Dendritic cell treated with granulocyte-macrophage colony-stimulating factor and Interleukin-4, amounts not matched to agents 40 ng/mL and 50 ng/mL, for 4 days (primary cell): ENCODE measurements at regions of chr7 and their contacts with region 1.

Region 1: GRCh38 chr7:74206589-74207120 is 3.2 kb upstream of the LAT2 start:
- H3K4me3 Mint-ChIP-seq: peak overlapping the region; percentile 46
- H3K27ac Mint-ChIP-seq: peak overlapping the region; percentile 54
- H3K4me1 Mint-ChIP-seq: peaks cover 58% of the 10 kb centered on the region
- H3K27me3 Mint-ChIP-seq: no peaks in the 10 kb centered on the region

Region 2: GRCh38 chr7:73865738-73866445 is 340.8 kb before region 1 on chr7:
- intact Hi-C with region 1: loop called (anchors 5 kb)
- H3K4me3 Mint-ChIP-seq: no peak overlapping the region
- H3K27ac Mint-ChIP-seq: no peak overlapping the region
- H3K4me1 Mint-ChIP-seq: no peaks in the 10 kb centered on the region
- H3K27me3 Mint-ChIP-seq: peaks cover 12% of the 10 kb centered on the region

Region 3: GRCh38 chr7:74061840-74062539 is 144.7 kb before region 1 on chr7:
- intact Hi-C with region 1: loop called (anchors 1 kb)
- H3K4me3 Mint-ChIP-seq: no peak overlapping the region
- H3K27ac Mint-ChIP-seq: peak overlapping the region; percentile 77
- H3K4me1 Mint-ChIP-seq: peaks cover 20% of the 10 kb centered on the region
- H3K27me3 Mint-ChIP-seq: no peaks in the 10 kb centered on the region

Region 4: DNA sequence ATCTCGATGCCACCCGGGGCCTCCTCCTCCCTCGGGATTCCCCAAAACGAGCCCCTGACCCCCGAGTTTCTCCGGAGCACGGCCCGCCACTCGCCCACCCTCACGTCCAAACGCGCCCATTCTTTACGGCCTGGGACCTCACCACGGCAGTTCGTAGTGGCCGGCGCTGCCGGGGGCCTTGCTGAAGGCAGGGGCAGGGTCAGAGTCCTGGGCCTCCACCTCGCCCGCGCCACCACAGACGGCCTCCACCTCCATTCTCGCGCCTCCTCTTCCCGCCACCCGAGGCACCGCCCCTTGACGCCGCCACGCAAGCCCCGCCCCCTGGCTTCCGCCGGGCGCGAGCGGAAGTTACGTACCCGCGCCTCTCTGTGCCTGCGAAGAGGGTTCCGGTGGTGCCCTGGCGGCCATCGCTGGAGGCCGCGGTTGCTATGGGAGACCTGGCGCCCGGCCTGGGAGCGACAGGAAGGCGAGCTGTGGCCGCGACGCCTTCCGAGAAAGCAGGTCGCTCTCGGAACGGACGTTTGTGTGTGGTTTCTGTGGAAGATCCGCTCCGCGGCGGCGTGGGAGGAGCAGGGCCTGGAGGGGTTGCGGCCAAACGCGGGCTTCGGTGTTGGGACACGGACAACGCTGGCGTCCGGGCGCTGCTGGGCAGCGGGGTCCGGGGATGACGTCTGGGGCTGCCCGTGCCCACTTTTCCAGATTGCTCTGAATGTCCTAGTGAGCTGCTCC is 47.6 kb after region 1 on chr7 and contains the start of gene RFC2:
- intact Hi-C with region 1: loop called (anchors 5 kb)
- H3K4me3 Mint-ChIP-seq: peak within 1 kb of the TSS; percentile 99
- H3K27ac Mint-ChIP-seq: peak within 1 kb of the TSS; percentile 98
- H3K4me1 Mint-ChIP-seq: peaks cover 46% of the 10 kb centered on the region
- H3K27me3 Mint-ChIP-seq: no peaks in the 10 kb centered on the region

Region 5: DNA sequence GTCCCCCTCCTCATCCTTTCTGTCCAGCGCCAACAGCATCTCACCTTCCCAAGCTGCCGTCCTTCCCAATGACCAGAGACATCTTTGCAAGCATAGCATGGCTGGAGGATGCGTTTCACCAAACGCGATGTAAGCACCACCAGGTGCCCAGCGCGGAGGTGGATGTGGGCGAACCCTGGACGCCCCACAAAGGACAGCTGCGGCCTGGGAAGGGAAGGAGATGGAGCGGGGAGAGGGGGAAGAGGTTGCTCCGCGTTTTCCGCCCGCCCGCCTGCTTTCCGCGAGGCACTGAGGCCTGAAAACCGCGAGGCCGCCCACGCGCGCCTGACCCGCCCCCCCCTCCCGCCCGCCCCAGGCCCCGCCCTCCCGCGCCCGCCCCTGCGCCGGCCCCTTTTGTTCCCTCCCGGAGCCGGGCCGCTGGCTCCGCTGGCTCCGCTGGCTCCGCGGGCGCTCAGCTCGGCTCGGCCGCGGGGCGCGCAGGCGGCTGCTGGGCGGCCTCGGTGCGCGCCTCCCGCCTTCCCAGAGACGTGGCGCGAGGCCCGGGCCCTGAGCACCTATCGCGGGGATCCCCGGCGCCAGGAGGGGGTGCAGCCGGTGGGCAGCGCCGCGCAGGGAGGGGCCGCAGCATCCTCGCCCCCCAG is 82.5 kb after region 1 on chr7 and contains the start of gene CLIP2:
- intact Hi-C with region 1: loop called (anchors 10 kb)
- H3K4me3 Mint-ChIP-seq: peak within 1 kb of the TSS; percentile 85
- H3K27ac Mint-ChIP-seq: peak within 1 kb of the TSS; percentile 66
- H3K4me1 Mint-ChIP-seq: peaks cover 64% of the 10 kb centered on the region
- H3K27me3 Mint-ChIP-seq: peaks cover 40% of the 10 kb centered on the region

Region 6: DNA sequence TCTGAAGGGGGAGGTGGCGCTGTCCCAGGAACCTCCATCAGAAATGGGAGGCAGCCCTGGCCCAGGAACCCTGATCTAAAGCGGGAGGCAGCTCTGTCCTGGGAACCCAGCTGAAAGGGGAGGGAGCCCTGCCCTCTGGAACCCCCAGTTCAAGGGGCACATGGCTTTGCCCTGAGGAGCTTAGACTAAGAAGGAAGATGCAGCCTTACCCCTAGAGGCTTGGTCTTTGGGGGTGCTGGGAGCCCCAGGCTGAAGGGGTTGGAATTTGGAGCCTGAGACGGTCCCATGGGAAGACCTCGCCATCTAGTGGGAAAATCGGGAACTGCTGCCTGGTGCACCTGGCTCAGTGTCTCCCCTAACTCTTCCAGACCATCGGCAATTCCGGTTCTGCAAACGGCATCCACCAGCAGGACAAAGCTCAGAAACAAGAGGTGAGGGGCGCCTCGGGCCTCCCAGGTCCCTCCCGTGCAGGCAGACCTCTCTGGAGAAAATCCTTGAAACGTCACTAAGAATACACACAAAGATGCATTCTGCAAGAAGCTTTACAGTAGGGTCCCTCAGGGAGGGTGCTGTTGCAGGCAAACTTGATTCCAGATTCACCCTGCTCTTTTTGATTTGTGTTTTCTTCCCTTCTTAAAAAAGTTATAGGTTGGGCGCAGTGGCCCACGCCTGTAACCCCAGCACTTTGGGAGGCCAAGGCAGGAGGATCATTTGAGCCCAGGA is 194.6 kb after region 1 on chr7:
- intact Hi-C with region 1: loop called (anchors 1 kb)
- H3K4me3 Mint-ChIP-seq: no peak overlapping the region
- H3K27ac Mint-ChIP-seq: no peak overlapping the region
- H3K4me1 Mint-ChIP-seq: no peaks in the 10 kb centered on the region
- H3K27me3 Mint-ChIP-seq: no peaks in the 10 kb centered on the region